ENCODE measurements at regions of chr2 and their contacts with region 1.

Region 1: DNA sequence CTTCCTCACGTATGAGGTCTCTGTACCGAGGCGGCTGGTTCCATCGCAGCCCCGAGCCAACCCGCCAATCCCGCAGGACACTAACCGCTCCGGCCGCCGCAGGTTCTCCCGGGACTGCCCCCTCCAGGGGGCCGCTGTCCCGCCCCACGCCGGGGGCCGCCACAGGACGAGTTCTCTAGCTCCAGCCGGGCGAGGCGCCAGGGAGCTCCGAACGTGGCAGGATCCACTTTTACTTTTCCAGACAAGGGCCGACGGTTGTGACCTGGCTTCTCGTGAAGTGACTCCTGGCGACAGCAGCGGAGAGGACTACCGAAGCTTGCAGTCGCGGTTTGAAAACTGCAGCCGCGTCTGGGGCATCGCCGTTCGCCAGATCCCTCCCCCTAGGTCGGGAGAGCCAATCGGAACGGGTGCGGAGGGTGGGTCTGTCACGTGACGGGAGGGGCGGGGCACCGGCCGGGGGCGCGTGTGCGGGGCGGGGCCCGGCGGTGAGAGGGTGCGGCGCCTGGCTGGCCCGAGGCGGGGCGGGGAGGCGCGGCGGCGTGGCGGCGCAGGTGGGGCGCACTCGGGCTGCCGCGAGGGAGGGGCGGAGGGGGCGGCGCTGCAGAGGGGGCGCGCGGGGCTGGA is at the start of gene STK17B:
- DNase-seq: peak; percentile 92 to 97 (median 95)
- ATAC-seq: peak; percentile 81
- H3K4me3 ChIP-seq: peak within 1 kb of the TSS; percentile 78
- H3K4me3 Mint-ChIP-seq: peak within 1 kb of the TSS; percentile 87 to 98 (median 94)
- H3K27ac ChIP-seq: peak within 1 kb of the TSS; percentile 98
- H3K27ac Mint-ChIP-seq: peak within 1 kb of the TSS; percentile 89 to 98 (median 96)
- H3K4me1 ChIP-seq: peaks cover 29 to 37% of the 10 kb centered on the region in 2 donors
- H3K4me1 Mint-ChIP-seq: peaks cover 19 to 43% (median 38%) of the 10 kb centered on the region in 7 donors
- H3K27me3 ChIP-seq: no peaks in the 10 kb centered on the region
- H3K27me3 Mint-ChIP-seq: peaks cover 0 to 2% (median 0%) of the 10 kb centered on the region in 5 donors
- total RNA-seq, gene STK17B: 274 to 513 (median 338) TPM

Region 2: GRCh38 chr2:195559431-195559914 is 611.9 kb before region 1 on chr2:
- CTCF ChIA-PET with region 1: no interaction called
- POLR2A ChIA-PET with region 1: no interaction called
- intact Hi-C with region 1: loop called in 1 of 2 experiments (anchors 5 kb)
- DNase-seq: peak; percentile 14 to 93 (median 90)
- ATAC-seq: peak; percentile 94
- H3K4me3 ChIP-seq: peak overlapping the region; percentile 33
- H3K4me3 Mint-ChIP-seq: peak overlapping the region; percentile 61 to 89 (median 76)
- H3K27ac ChIP-seq: peak overlapping the region; percentile 71
- H3K27ac Mint-ChIP-seq: peak overlapping the region; percentile 84 to 99 (median 94)
- H3K4me1 ChIP-seq: peaks cover 58 to 74% of the 10 kb centered on the region in 2 donors
- H3K4me1 Mint-ChIP-seq: peaks cover 43 to 78% (median 69%) of the 10 kb centered on the region in 7 donors
- H3K27me3 ChIP-seq: no peaks in the 10 kb centered on the region
- H3K27me3 Mint-ChIP-seq: no peaks in the 10 kb centered on the region

Region 3: DNA sequence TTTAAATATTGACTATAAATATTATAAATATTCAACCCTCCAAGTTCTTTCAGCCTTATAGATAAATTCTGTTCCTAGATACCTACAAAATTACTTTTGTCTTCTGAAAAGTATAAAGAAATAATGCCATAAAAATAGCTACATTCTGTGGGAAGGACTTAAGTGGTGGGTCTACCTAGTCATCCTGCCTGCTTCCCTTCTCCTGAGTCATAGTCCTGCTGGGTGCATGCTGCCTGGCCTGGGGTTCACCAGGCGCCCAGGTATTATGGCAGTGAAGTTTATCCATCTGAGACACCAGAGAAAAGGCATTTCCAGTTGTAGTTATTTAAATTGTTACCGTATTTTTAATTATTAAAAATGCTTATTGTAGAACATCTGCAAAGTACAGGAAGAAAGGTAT is 346.9 kb before region 1 on chr2:
- CTCF ChIA-PET with region 1: no interaction called
- POLR2A ChIA-PET with region 1: no interaction called
- intact Hi-C with region 1: no loop called
- DNase-seq: no peak
- ATAC-seq: no peak
- H3K4me3 ChIP-seq: no peak overlapping the region
- H3K4me3 Mint-ChIP-seq: no peak overlapping the region
- H3K27ac ChIP-seq: no peak overlapping the region
- H3K27ac Mint-ChIP-seq: no peak overlapping the region
- H3K4me1 ChIP-seq: no peaks in the 10 kb centered on the region
- H3K4me1 Mint-ChIP-seq: peaks cover 0 to 2% (median 0%) of the 10 kb centered on the region in 7 donors
- H3K27me3 ChIP-seq: peaks cover 0 to under 1% of the 10 kb centered on the region in 2 donors
- H3K27me3 Mint-ChIP-seq: peaks cover 0 to 6% (median 5%) of the 10 kb centered on the region in 5 donors

Region 4: GRCh38 chr2:196131384-196131937 is 39.9 kb before region 1 on chr2:
- CTCF ChIA-PET with region 1: interaction called, 3 read pairs
- POLR2A ChIA-PET with region 1: interaction called, 4 read pairs
- intact Hi-C with region 1: loop called (anchors 1 to 5 kb)
- DNase-seq: peak in 4 of 9 donors; percentile 30 to 57 (median 50)
- ATAC-seq: peak; percentile 58
- H3K4me3 ChIP-seq: no peak overlapping the region
- H3K4me3 Mint-ChIP-seq: peak overlapping the region in 3 of 10 donors; percentile 1 to 36 (median 32)
- H3K27ac ChIP-seq: no peak overlapping the region
- H3K27ac Mint-ChIP-seq: peak overlapping the region in 8 of 9 donors; percentile 63 to 91 (median 79)
- H3K4me1 ChIP-seq: no peaks in the 10 kb centered on the region
- H3K4me1 Mint-ChIP-seq: peaks cover 0 to 27% (median 16%) of the 10 kb centered on the region in 7 donors
- H3K27me3 ChIP-seq: no peaks in the 10 kb centered on the region
- H3K27me3 Mint-ChIP-seq: no peaks in the 10 kb centered on the region

Region 5: GRCh38 chr2:196182439-196183171 is 11.2 kb after region 1 on chr2:
- CTCF ChIA-PET with region 1: interaction called, 3 read pairs
- POLR2A ChIA-PET with region 1: interaction called, 71 read pairs
- intact Hi-C with region 1: loop called in 1 of 2 experiments (anchors 1 kb)
- DNase-seq: peak in 1 of 9 donors; percentile 48
- ATAC-seq: peak; percentile 39
- H3K4me3 ChIP-seq: peak overlapping the region; percentile 34
- H3K4me3 Mint-ChIP-seq: peak overlapping the region; percentile 27 to 80 (median 70)
- H3K27ac ChIP-seq: peak overlapping the region; percentile 72
- H3K27ac Mint-ChIP-seq: peak overlapping the region; percentile 89 to 97 (median 93)
- H3K4me1 ChIP-seq: peaks cover 69 to 76% of the 10 kb centered on the region in 2 donors
- H3K4me1 Mint-ChIP-seq: peaks cover 55 to 98% (median 85%) of the 10 kb centered on the region in 7 donors
- H3K27me3 ChIP-seq: no peaks in the 10 kb centered on the region
- H3K27me3 Mint-ChIP-seq: no peaks in the 10 kb centered on the region

Region 6: GRCh38 chr2:196213252-196213980 is 42.1 kb after region 1 on chr2:
- CTCF ChIA-PET with region 1: interaction called, 63 read pairs
- POLR2A ChIA-PET with region 1: interaction called, 359 read pairs
- intact Hi-C with region 1: loop called (anchors 1 kb)
- DNase-seq: peak in 7 of 9 donors; percentile 29 to 77 (median 58)
- ATAC-seq: peak; percentile 36
- H3K4me3 ChIP-seq: no peak overlapping the region
- H3K4me3 Mint-ChIP-seq: peak overlapping the region in 9 of 10 donors; percentile 0 to 94 (median 61)
- H3K27ac ChIP-seq: peak overlapping the region; percentile 78
- H3K27ac Mint-ChIP-seq: peak overlapping the region in 8 of 9 donors; percentile 95 to 100 (median 98)
- H3K4me1 ChIP-seq: peaks cover 14 to 57% of the 10 kb centered on the region in 2 donors
- H3K4me1 Mint-ChIP-seq: peaks cover 51 to 96% (median 94%) of the 10 kb centered on the region in 7 donors
- H3K27me3 ChIP-seq: no peaks in the 10 kb centered on the region
- H3K27me3 Mint-ChIP-seq: no peaks in the 10 kb centered on the region

Region 7: DNA sequence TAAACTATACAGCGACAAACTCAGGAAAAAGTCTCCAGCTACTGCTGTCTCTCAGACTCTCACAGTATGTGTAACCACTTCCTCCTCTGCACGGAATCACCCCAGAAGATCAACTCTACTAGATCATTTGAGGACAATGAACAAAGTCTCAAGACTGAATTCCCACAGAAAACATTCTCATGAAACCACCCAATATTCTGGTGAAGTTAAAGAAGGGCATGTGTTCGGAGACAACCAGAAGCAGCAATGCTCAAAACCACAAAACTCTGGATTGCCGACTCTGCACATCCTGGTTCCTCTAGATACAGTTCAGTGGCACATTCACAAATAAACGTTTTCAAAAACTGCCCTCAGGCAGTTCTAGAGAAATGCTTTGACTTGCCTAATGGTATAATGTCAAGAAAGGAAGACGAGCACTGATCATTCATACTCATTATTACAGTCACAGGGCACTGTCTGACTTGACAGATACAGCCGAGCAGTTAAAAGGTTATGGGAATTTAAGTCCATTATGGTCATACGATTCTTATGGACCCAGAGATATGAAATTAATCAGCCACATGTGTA is 91.9 kb after region 1 on chr2:
- CTCF ChIA-PET with region 1: interaction called, 5 read pairs
- POLR2A ChIA-PET with region 1: interaction called, 45 read pairs
- intact Hi-C with region 1: loop called (anchors 1 kb)
- DNase-seq: peak in 7 of 9 donors; percentile 70 to 88 (median 83)
- ATAC-seq: peak; percentile 90
- H3K4me3 ChIP-seq: peak overlapping the region; percentile 31
- H3K4me3 Mint-ChIP-seq: peak overlapping the region; percentile 63 to 90 (median 82)
- H3K27ac ChIP-seq: peak overlapping the region; percentile 87
- H3K27ac Mint-ChIP-seq: peak overlapping the region; percentile 90 to 99 (median 97)
- H3K4me1 ChIP-seq: peaks cover 53 to 82% of the 10 kb centered on the region in 2 donors
- H3K4me1 Mint-ChIP-seq: peaks cover 39 to 94% (median 89%) of the 10 kb centered on the region in 7 donors
- H3K27me3 ChIP-seq: no peaks in the 10 kb centered on the region
- H3K27me3 Mint-ChIP-seq: no peaks in the 10 kb centered on the region

Region 8: DNA sequence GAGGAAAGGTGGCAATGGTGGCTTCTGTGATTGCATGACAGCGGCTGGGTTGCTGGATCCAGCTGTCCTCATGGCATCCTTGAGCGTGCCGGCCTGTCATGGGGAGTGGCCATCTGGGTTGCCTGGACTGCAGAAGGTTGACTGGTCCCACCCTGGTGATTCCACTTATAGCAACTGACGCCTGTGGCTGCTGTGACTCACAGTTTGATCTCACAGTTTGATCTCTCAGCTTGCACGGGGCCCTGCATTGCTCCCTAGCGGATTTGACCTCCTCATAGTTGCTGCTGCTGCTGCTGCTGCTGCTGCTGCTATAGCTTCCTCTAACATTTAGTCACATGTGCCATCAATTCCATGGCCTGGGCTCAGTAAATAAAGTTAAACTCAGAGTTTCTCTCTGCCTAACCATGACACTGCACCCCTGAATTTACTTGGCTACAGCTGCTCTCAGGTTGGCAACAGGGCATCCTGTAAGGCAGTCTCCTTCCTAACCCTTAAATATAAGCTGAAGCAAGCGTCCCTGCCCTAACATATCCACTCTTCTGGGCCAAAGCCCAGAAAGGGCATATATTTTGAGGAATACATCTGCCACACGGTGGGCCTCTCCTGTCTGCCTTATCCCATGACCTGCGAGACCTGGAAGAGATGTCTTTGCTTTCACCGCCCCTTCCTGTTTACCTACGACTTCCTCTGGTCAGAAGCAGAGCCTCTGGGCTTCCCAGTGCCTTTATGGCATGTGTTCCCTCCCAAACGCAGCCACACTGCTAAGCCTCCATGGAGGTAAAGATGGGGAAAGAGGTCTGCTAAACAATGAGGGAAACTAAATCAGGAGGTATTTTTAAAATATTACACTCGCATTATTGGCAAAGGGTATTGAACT is 430.3 kb after region 1 on chr2:
- CTCF ChIA-PET with region 1: no interaction called
- POLR2A ChIA-PET with region 1: no interaction called
- intact Hi-C with region 1: no loop called
- DNase-seq: no peak
- ATAC-seq: no peak
- H3K4me3 ChIP-seq: no peak overlapping the region
- H3K4me3 Mint-ChIP-seq: no peak overlapping the region
- H3K27ac ChIP-seq: no peak overlapping the region
- H3K27ac Mint-ChIP-seq: no peak overlapping the region
- H3K4me1 ChIP-seq: no peaks in the 10 kb centered on the region
- H3K4me1 Mint-ChIP-seq: peaks cover 0 to 3% (median 0%) of the 10 kb centered on the region in 7 donors
- H3K27me3 ChIP-seq: no peaks in the 10 kb centered on the region
- H3K27me3 Mint-ChIP-seq: peaks cover 21 to 39% (median 24%) of the 10 kb centered on the region in 5 donors

Region 9: DNA sequence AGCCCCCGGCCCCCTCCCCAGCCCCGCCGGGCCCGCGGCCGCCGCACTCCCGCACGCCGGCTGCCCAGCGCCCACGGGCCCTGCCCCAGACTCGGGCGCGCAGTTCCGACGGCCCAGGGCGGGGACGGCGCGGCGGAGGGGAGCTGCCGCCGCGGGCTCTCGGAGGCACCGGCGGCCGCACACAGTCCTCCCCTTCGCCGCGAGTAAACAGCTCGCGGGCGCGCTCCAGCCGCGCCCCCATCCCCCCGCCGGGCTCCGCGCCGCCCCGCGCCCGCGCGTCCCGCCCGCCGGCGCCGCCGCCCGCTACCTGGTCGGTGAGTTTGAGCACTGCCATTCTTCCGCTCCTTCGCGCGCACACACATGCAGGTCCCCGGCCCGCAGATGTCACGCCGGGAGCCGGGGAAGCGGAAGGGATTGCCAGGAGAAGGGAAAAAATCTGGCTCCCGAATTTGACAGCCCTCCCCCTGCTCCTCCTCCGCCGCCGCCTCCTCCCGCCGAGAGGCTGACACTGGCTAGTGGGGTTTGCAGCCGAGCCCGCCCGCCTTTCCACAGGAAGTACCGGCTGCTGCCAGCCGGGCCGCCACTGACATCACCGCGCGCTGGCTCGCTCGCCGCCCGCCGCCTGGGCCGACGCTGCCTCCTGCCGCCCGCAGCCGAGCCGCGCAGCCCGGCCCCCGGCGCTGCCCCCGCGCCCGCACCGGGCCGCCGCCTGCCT is 1139.1 kb after region 1 on chr2 and contains the start of gene ANKRD44:
- CTCF ChIA-PET with region 1: no interaction called
- POLR2A ChIA-PET with region 1: no interaction called
- intact Hi-C with region 1: loop called in 1 of 2 experiments (anchors 10 kb)
- DNase-seq: peak; percentile 86 to 94 (median 91)
- ATAC-seq: peak; percentile 88
- H3K4me3 ChIP-seq: peak within 1 kb of the TSS; percentile 90
- H3K4me3 Mint-ChIP-seq: peak within 1 kb of the TSS; percentile 89 to 98 (median 94)
- H3K27ac ChIP-seq: peak within 1 kb of the TSS; percentile 85
- H3K27ac Mint-ChIP-seq: peak within 1 kb of the TSS; percentile 93 to 99 (median 95)
- H3K4me1 ChIP-seq: peaks cover 34 to 43% of the 10 kb centered on the region in 2 donors
- H3K4me1 Mint-ChIP-seq: peaks cover 35 to 74% (median 68%) of the 10 kb centered on the region in 7 donors
- H3K27me3 ChIP-seq: no peaks in the 10 kb centered on the region
- H3K27me3 Mint-ChIP-seq: no peaks in the 10 kb centered on the region
- total RNA-seq, gene ANKRD44: 234 to 296 (median 291) TPM